ENCODE measurements at regions of chr2 and their contacts with region 1.

Region 1: GRCh38 chr2:160411167-160411566 is 82.4 kb downstream of the RBMS1 start:
- DNase-seq: no peak
- ATAC-seq: no peak
- H3K4me3 ChIP-seq: no peak overlapping the region
- H3K27ac ChIP-seq: no peak overlapping the region
- H3K4me1 ChIP-seq: peaks cover 8% of the 10 kb centered on the region
- H3K27me3 ChIP-seq: peaks cover 0 to 8% of the 10 kb centered on the region in 2 experiments; a peak in 1 of 4 replicates
- CTCF ChIP-seq: no peak
- EP300 ChIP-seq: no peak
- POLR2A ChIP-seq: no peak
- RAD21 ChIP-seq: no peak

Region 2: DNA sequence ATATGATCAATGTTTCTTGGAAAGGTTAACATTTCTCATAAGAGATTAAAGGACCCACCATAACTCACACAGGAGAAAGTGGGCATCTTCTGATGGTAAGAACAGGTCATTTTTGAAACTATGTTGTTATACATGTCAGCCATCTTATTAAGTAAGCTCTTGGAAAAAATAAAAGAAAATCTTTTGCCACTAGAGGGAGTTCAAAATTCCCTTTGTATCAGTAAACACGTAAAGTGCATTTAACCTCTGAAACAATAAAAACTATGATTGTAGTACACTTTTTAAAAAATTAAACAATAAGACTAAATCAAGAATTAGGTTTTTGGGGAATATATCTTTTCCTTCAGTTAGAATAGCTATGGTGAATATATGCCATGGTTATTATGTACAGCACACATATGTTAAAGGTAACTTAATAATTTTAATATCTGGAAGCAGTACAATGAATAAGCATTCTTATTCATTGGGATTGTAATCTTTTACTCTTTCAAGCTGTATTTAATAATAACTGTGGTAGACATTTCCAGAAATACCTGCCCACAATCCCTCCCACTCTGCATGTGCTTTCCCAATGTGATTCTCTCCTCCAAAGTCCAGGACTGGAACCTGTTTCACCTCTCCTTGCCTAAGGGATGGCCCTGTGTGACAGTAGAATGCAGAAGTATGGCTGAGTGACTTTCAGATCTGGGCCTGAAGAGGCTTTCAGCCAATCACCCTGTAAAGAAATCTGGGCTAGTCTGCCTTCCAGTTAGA is 18.3 kb after region 1 on chr2:
- CTCF ChIA-PET with region 1: interaction called, 31 read pairs
- POLR2A ChIA-PET with region 1: no interaction called
- RAD21 ChIA-PET with region 1: no interaction called
- SMC1A ChIA-PET with region 1: no interaction called
- in situ Hi-C with region 1: no loop called
- intact Hi-C with region 1: no loop called
- DNase-seq: no peak
- ATAC-seq: peak; percentile 71
- H3K4me3 ChIP-seq: no peak overlapping the region
- H3K27ac ChIP-seq: no peak overlapping the region
- H3K4me1 ChIP-seq: no peaks in the 10 kb centered on the region; the same call in 1 of the 2 replicates
- H3K27me3 ChIP-seq: no peaks in the 10 kb centered on the region
- CTCF ChIP-seq: peak; percentile 31 to 47 (median 41); a peak in 5 of 6 replicates
- EP300 ChIP-seq: no peak
- POLR2A ChIP-seq: no peak
- RAD21 ChIP-seq: no peak

Measured in GM12878 (cell line).